ENCODE measurements at regions of chr17 and their contacts with region 1.

Region 1: GRCh38 chr17:58487589-58488427 is at the start of gene HSF5:
- DNase-seq: peak; percentile 56
- CTCF ChIP-seq: peak; percentile 37

Region 2: DNA sequence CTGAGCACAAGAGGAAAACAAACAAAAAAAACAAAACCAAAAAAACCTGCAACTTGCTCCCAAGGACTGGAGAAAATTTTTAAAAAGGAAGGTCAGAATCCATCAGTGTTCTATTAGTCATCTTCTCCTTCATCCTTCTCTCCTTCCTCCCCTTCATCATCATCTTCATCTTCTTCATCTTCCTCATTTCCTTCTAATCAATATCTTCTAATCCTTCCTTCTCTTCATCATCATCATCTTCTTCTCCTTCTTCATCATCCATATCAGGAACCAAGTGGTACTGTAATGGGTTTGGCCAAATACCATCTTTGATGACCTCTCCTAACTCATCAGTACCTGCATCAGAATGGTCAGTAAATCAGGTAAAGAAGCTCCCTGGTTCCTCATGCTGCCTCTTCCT is 11.8 kb before region 1 on chr17:
- CTCF ChIA-PET with region 1: interaction called, 10 read pairs
- POLR2A ChIA-PET with region 1: no interaction called
- DNase-seq: no peak
- CTCF ChIP-seq: no peak

Region 3: DNA sequence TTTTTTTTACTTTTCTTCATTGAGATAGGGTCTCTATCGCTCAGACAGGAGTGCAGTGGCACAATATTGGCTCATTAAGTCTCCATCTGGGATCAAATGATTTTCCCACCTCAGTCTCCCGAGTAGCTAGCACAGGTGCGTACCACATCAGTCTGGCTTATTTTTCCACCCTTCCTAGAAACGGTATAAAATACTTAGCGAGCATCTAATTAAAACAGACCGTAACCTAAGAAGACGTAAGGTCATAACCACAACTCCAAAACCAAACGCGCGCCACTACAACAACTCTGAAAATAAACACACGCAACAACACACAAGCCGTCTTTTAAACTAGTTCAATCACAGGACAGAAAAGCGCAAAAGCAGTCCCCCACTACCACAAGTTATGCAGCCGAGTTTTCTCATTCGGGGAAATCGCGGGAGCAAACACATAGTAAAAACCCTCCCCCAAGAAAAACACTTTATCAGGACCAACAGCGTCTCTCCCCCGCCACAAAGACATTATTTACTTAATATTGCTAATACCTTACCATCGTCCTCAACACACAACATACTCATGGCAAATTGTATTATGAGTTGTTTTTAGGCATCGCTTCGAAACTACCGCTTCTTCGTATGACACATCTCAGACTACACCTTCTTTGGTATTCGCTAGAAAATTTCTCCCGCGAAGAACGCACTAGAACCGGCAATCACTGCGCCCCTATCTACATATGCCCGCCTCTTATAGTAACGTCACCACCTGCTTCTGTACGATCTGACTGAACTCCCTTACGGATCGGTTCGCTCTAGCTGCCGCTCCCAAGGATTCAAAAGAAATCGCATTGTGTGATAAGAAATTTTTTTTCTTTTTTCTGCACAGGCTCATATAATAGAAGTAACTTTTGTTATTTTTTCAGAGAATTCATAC is 171.3 kb after region 1 on chr17:
- CTCF ChIA-PET with region 1: no interaction called
- POLR2A ChIA-PET with region 1: no interaction called
- DNase-seq: peak; percentile 85
- CTCF ChIP-seq: no peak